ENCODE measurements at regions of chr10 and their contacts with region 1.

Region 1: GRCh38 chr10:58268870-58269605 is at the start of gene CISD1:
- DNase-seq: peak; percentile 96
- H3K4me3 Mint-ChIP-seq: peak within 1 kb of the TSS; percentile 84
- H3K27ac Mint-ChIP-seq: peak within 1 kb of the TSS; percentile 94
- H3K4me1 Mint-ChIP-seq: peaks cover 24% of the 10 kb centered on the region
- H3K27me3 Mint-ChIP-seq: no peaks in the 10 kb centered on the region
- total RNA-seq, gene CISD1: 42.3 to 44.0 TPM

Region 2: GRCh38 chr10:56360967-56361612 is 1907.9 kb before region 1 on chr10 and contains the start of gene ZWINT:
- CTCF ChIA-PET with region 1: no interaction called
- POLR2A ChIA-PET with region 1: no interaction called
- intact Hi-C with region 1: loop called (anchors 2 kb)
- DNase-seq: peak; percentile 96
- H3K4me3 Mint-ChIP-seq: peak within 1 kb of the TSS; percentile 98
- H3K27ac Mint-ChIP-seq: peak within 1 kb of the TSS; percentile 85
- H3K4me1 Mint-ChIP-seq: peaks cover 42% of the 10 kb centered on the region
- H3K27me3 Mint-ChIP-seq: no peaks in the 10 kb centered on the region
- total RNA-seq, gene ZWINT: 69.2 to 72.7 TPM

Region 3: GRCh38 chr10:58237014-58237830 is 31.8 kb before region 1 on chr10:
- CTCF ChIA-PET with region 1: no interaction called
- POLR2A ChIA-PET with region 1: no interaction called
- intact Hi-C with region 1: loop called (anchors 1 kb)
- DNase-seq: no peak
- H3K4me3 Mint-ChIP-seq: no peak overlapping the region
- H3K27ac Mint-ChIP-seq: peak overlapping the region; percentile 64
- H3K4me1 Mint-ChIP-seq: peaks cover 37% of the 10 kb centered on the region
- H3K27me3 Mint-ChIP-seq: no peaks in the 10 kb centered on the region

Region 4: GRCh38 chr10:58291538-58292174 is 22.6 kb after region 1 on chr10:
- CTCF ChIA-PET with region 1: interaction called, 8 read pairs
- POLR2A ChIA-PET with region 1: no interaction called
- intact Hi-C with region 1: loop called (anchors 1 kb)
- DNase-seq: peak; percentile 31
- H3K4me3 Mint-ChIP-seq: no peak overlapping the region
- H3K27ac Mint-ChIP-seq: no peak overlapping the region
- H3K4me1 Mint-ChIP-seq: no peaks in the 10 kb centered on the region
- H3K27me3 Mint-ChIP-seq: no peaks in the 10 kb centered on the region

Region 5: GRCh38 chr10:58334817-58335305 is 65.8 kb after region 1 on chr10 and contains the start of gene UBE2D1:
- CTCF ChIA-PET with region 1: no interaction called
- POLR2A ChIA-PET with region 1: interaction called, 6 read pairs
- intact Hi-C with region 1: loop called (anchors 1 kb)
- DNase-seq: peak; percentile 88
- H3K4me3 Mint-ChIP-seq: peak within 1 kb of the TSS; percentile 96
- H3K27ac Mint-ChIP-seq: peak within 1 kb of the TSS; percentile 75
- H3K4me1 Mint-ChIP-seq: peaks cover 29% of the 10 kb centered on the region
- H3K27me3 Mint-ChIP-seq: peaks cover 6% of the 10 kb centered on the region
- total RNA-seq, gene UBE2D1: 14.5 to 14.8 TPM

Region 6: DNA sequence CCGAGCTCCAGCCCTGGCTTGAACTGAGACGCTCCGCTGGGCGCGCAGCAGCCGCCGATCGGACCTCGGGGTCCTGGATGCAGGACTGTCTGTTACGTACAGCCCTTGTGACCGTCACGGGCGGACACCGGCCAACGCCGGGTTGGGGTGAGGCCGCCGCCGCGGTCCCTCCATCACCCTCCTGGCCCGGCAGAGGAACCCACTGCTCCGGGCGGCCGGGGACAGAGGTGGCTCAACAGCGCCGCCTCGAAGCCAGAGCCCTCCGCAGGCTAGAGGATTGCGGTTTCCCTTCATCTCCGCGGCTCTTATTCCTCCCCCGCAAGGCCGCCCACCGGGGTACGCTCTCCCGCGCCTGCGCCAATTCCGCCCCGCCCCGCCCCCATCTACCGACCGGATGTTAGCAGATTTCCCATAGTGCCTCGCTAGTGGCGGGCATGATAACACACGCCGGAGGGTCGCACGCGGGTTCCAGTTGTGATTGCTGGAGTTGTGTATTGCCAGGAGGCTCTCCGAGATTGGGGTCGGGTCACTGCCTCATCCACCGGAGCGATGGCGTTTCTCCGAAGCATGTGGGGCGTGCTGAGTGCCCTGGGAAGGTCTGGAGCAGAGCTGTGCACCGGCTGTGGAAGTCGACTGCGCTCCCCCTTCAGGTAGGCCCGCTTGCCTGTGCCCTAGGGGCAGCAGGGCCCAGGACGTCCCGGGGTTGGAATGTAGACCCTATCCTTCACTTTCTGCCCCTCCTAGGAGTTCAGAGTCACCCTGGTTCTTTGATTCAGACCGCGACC is 116.2 kb after region 1 on chr10 and contains the start of gene TFAM:
- CTCF ChIA-PET with region 1: interaction called, 7 read pairs
- POLR2A ChIA-PET with region 1: interaction called, 13 read pairs
- intact Hi-C with region 1: loop called (anchors 1 kb)
- DNase-seq: peak; percentile 99
- H3K4me3 Mint-ChIP-seq: peak within 1 kb of the TSS; percentile 99
- H3K27ac Mint-ChIP-seq: peak within 1 kb of the TSS; percentile 92
- H3K4me1 Mint-ChIP-seq: peaks cover 37% of the 10 kb centered on the region
- H3K27me3 Mint-ChIP-seq: no peaks in the 10 kb centered on the region
- total RNA-seq, gene TFAM: 85.4 to 92.5 TPM

Region 7: DNA sequence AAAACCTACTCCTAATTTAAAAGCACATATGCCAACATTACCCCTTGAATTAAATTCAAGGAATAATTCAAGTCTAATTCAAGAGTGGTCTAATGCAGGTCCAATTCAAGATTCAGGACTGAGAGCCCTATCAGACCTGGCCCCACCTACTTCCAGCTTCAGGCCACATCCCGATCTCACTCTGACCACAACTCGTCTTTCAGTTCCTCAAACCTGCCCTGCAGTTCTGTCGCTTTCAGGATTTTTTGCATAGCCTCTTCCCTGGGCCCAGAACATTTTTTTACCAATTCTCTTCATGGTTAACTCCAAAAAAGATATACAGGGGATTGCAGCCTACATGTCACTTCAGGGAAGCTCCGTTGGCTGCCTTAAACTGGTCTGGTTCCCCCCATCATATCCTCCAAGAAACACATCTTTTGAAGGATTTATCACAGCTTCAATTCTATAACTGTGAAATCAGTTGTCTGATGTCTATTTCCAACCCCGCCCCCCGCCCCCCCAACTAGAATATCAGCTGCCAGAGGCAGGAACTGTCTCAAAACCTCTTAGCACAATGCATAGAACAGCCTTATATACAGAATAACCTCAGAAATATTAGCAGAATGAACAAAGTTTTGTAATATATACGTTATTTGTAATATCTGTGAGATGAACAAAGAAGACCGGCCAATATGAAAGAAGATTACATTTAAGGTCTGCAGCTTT is 1616.5 kb after region 1 on chr10:
- CTCF ChIA-PET with region 1: no interaction called
- POLR2A ChIA-PET with region 1: no interaction called
- intact Hi-C with region 1: loop called (anchors 1 kb)
- DNase-seq: peak; percentile 44
- H3K4me3 Mint-ChIP-seq: no peak overlapping the region
- H3K27ac Mint-ChIP-seq: peak overlapping the region; percentile 96
- H3K4me1 Mint-ChIP-seq: peaks cover 87% of the 10 kb centered on the region
- H3K27me3 Mint-ChIP-seq: no peaks in the 10 kb centered on the region